Mammary epithelial cell (primary cell): ENCODE measurements at regions of chr20 and their contacts with region 1.

Region 1: DNA sequence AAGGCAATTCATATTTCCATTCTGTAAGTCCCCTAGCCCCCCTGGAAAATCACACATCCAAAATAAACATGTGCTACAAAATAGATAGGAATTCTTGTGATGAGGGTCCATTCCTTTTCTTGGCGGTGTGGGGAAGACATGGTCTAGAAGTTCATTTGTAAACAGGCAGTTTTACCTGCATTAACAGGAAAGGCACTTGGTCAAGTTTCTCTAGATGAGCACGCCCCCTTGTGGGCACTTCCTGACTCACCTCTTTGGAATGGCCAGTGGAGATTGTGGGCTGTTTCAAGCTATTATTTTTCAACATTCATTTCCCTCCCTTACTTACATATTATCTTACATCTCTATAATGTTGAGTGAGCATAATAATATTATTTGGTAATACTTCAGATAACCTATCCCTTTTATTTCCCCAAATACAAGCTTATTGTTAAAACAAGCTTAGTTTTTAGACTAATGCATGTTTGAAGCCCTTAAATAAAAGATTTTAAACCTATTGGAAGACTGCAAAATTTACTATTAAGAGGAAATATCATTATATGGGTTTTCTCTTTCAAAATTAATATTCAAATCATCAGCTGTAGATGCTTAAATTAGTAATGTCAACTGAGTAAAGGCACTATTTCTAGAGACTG is 92.1 kb downstream of the TASP1 start:
- DNase-seq: peak; percentile 54
- H3K4me3 ChIP-seq: no peak overlapping the region
- H3K27ac ChIP-seq: no peak overlapping the region
- H3K4me1 ChIP-seq: no peaks in the 10 kb centered on the region
- H3K27me3 ChIP-seq: no peaks in the 10 kb centered on the region
- CTCF ChIP-seq: peak; percentile 69 to 76

Region 2: DNA sequence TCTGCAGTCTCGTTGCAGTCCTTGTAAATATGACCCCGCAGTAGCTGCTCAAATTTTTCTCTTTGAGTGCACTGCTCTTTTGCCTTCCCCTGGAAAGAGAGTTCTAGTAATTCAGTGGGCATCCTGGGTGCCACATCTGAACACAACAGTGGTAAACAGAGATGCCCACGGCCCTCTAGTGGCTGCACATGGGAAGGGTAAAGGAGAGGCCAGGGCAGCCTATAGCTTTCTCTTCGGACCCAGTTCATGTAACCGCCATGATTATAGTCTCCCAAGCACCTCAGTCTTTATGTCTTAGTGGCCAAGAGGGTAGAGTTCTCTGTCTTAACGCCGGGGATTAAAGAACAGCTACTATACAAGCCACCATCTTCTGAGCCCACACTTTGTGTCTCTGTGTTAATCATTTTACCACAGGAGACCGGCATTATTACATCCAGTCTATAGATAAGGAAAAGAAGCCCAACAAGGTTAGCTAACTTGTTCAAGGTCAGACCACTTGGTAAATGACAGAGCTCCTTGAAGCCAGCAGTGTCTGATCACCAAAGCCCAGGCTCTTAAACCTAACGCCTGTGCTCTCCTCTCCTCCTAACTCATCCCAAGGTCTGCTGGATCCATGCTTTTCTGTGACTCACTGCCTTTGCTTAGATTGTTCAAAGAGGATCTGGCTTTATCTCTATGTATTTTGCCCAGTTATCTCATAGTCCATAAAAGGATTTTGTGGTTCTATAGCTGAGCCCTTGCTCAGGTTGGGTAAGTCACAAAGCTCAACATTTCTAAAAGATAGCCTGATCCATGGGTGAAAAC is 243.8 kb before region 1 on chr20:
- CTCF ChIA-PET with region 1: no interaction called
- dilution Hi-C with region 1: no loop called
- in situ Hi-C with region 1: loop called in 1 of 2 experiments (anchors 25 kb)
- intact Hi-C with region 1: no loop called
- DNase-seq: peak; percentile 30
- H3K4me3 ChIP-seq: no peak overlapping the region
- H3K27ac ChIP-seq: no peak overlapping the region
- H3K4me1 ChIP-seq: peaks cover 14% of the 10 kb centered on the region
- H3K27me3 ChIP-seq: no peaks in the 10 kb centered on the region
- CTCF ChIP-seq: peak; percentile 84

Region 3: GRCh38 chr20:13325033-13325432 is 221.6 kb before region 1 on chr20:
- CTCF ChIA-PET with region 1: interaction called, 4 read pairs
- dilution Hi-C with region 1: no loop called
- in situ Hi-C with region 1: loop called in 1 of 2 experiments (anchors 25 kb)
- intact Hi-C with region 1: loop called (anchors 1 kb)
- DNase-seq: no peak
- H3K4me3 ChIP-seq: no peak overlapping the region
- H3K27ac ChIP-seq: no peak overlapping the region
- H3K4me1 ChIP-seq: no peaks in the 10 kb centered on the region
- H3K27me3 ChIP-seq: no peaks in the 10 kb centered on the region
- CTCF ChIP-seq: peak; percentile 37 to 72

Region 4: DNA sequence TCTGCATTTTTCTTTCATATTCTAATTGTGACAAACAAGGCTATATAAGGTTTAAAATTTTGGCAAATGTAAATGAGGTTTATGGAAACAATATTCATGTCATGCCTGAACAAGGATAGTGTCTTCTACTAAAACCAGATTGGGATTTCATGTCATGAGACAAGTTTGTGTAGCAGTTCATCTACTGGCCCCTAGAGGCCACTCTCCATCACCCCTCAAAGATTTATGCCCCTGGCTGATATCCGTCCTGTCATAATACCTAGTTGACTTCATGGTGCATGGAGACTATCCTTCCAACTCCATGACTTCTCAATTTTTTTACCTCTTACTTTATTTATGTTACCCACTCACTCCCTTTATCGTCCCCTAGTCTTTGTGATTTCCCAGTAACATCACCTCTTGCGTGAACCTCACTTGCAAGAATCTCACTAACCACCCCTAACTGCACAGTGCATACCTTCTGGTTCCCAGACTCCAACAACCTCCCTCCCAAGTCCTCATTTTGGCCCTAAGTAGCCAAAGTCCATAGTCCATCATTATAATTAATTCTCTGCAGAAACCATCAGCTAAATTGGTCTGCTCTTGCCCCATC is 87.7 kb before region 1 on chr20:
- CTCF ChIA-PET with region 1: no interaction called
- dilution Hi-C with region 1: no loop called
- in situ Hi-C with region 1: no loop called
- intact Hi-C with region 1: loop called (anchors 1 kb)
- DNase-seq: peak; percentile 35
- H3K4me3 ChIP-seq: no peak overlapping the region
- H3K27ac ChIP-seq: no peak overlapping the region
- H3K4me1 ChIP-seq: peaks cover 8% of the 10 kb centered on the region
- H3K27me3 ChIP-seq: no peaks in the 10 kb centered on the region
- CTCF ChIP-seq: peak; percentile 85 to 91

Region 5: GRCh38 chr20:13694420-13695150 is 148.0 kb after region 1 on chr20:
- CTCF ChIA-PET with region 1: no interaction called
- dilution Hi-C with region 1: no loop called
- in situ Hi-C with region 1: no loop called
- intact Hi-C with region 1: no loop called
- DNase-seq: no peak
- H3K4me3 ChIP-seq: no peak overlapping the region
- H3K27ac ChIP-seq: no peak overlapping the region
- H3K4me1 ChIP-seq: no peaks in the 10 kb centered on the region
- H3K27me3 ChIP-seq: no peaks in the 10 kb centered on the region
- CTCF ChIP-seq: no peak

Region 6: GRCh38 chr20:13771853-13772453 is 225.3 kb after region 1 on chr20:
- CTCF ChIA-PET with region 1: interaction called, 3 read pairs
- dilution Hi-C with region 1: no loop called
- in situ Hi-C with region 1: no loop called
- intact Hi-C with region 1: loop called (anchors 10 kb)
- DNase-seq: no peak
- H3K4me3 ChIP-seq: no peak overlapping the region
- H3K27ac ChIP-seq: no peak overlapping the region
- H3K4me1 ChIP-seq: no peaks in the 10 kb centered on the region
- H3K27me3 ChIP-seq: no peaks in the 10 kb centered on the region
- CTCF ChIP-seq: peak; percentile 46 to 49